ENCODE measurements at regions of chr7 and their contacts with region 1.

Region 1: GRCh38 chr7:143008007-143008901 is 18.7 kb downstream of the OR9A2 start:
- DNase-seq: no peak
- H3K4me3 ChIP-seq: no peak overlapping the region
- CTCF ChIP-seq: peak; percentile 97

Region 2: GRCh38 chr7:142603870-142604448 is 404.3 kb before region 1 on chr7:
- CTCF ChIA-PET with region 1: interaction called, 22 read pairs
- POLR2A ChIA-PET with region 1: no interaction called
- DNase-seq: no peak
- H3K4me3 ChIP-seq: no peak overlapping the region; the same call in 1 of the 2 replicates
- CTCF ChIP-seq: peak; percentile 70

Region 3: GRCh38 chr7:142811154-142811737 is 197.0 kb before region 1 on chr7:
- CTCF ChIA-PET with region 1: interaction called, 16 read pairs
- POLR2A ChIA-PET with region 1: no interaction called
- DNase-seq: no peak
- H3K4me3 ChIP-seq: no peak overlapping the region
- CTCF ChIP-seq: peak; percentile 41

Region 4: DNA sequence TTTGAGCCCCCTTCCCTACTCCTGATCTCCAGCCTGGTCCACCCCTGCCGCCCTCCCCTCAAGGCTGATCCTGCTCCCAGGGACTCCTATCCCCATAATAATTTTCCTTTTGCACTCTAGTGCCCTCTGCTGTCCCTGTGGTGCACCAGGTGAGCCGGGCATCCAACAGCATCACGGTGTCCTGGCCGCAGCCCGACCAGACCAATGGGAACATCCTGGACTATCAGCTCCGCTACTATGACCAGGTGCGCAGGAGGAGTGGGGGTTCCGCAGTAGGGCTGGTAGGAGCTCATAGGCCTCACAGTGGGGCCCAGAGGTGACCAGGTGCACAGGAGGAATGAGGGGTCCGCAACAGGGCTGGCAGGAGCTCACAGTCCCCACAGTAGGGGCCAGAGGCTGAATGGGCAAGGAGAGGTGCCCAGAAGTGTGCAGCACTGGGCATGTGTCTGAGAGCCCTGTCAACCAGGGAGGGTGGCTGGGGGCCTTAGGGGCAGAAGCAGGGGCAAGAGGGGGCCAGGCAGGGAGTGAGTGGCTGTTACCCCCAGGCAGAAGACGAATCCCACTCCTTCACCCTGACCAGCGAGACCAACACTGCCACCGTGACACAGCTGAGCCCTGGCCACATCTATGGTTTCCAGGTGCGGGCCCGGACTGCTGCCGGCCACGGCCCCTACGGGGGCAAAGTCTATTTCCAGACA is 141.7 kb before region 1 on chr7:
- CTCF ChIA-PET with region 1: interaction called, 17 read pairs
- POLR2A ChIA-PET with region 1: no interaction called
- DNase-seq: no peak
- H3K4me3 ChIP-seq: no peak overlapping the region
- CTCF ChIP-seq: peak; percentile 62

Region 5: DNA sequence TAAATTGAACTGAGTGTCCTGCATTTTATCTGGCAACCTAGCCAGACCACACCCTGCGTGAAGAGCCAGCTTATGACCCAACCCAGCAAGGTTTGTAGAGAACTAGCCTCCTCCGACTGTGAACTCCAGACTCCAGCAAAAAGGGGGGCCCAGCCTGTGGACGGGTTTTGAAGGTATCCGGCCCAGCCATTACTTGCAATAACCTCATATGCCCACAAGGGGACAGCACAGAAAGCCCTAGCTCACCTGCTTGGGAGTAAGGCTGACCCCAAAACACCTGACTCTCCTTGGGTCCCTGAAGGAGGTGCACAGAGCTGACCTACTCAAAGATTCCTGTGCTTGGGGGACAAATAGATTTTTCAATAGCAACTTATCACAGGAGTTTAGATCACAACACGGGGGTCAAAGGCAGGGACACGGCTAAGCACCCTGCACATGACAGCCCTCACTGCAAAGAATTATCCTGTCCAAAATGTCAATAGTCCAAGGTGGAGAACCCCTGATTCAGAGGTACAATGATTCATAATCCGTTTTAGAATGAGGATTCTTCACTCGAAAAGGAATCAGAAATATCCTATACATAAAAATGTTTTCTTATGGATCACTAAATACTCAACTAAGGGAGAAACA is 127.3 kb before region 1 on chr7:
- CTCF ChIA-PET with region 1: interaction called, 52 read pairs
- POLR2A ChIA-PET with region 1: no interaction called
- DNase-seq: no peak
- H3K4me3 ChIP-seq: no peak overlapping the region
- CTCF ChIP-seq: peak; percentile 60

Region 6: GRCh38 chr7:142997456-142997989 is 10.7 kb before region 1 on chr7:
- CTCF ChIA-PET with region 1: interaction called, 102 read pairs
- POLR2A ChIA-PET with region 1: no interaction called
- DNase-seq: no peak
- H3K4me3 ChIP-seq: no peak overlapping the region
- CTCF ChIP-seq: no peak

Region 7: GRCh38 chr7:143069912-143070500 is 61.8 kb after region 1 on chr7:
- CTCF ChIA-PET with region 1: no interaction called
- POLR2A ChIA-PET with region 1: no interaction called
- DNase-seq: no peak
- H3K4me3 ChIP-seq: no peak overlapping the region
- CTCF ChIP-seq: no peak

Region 8: DNA sequence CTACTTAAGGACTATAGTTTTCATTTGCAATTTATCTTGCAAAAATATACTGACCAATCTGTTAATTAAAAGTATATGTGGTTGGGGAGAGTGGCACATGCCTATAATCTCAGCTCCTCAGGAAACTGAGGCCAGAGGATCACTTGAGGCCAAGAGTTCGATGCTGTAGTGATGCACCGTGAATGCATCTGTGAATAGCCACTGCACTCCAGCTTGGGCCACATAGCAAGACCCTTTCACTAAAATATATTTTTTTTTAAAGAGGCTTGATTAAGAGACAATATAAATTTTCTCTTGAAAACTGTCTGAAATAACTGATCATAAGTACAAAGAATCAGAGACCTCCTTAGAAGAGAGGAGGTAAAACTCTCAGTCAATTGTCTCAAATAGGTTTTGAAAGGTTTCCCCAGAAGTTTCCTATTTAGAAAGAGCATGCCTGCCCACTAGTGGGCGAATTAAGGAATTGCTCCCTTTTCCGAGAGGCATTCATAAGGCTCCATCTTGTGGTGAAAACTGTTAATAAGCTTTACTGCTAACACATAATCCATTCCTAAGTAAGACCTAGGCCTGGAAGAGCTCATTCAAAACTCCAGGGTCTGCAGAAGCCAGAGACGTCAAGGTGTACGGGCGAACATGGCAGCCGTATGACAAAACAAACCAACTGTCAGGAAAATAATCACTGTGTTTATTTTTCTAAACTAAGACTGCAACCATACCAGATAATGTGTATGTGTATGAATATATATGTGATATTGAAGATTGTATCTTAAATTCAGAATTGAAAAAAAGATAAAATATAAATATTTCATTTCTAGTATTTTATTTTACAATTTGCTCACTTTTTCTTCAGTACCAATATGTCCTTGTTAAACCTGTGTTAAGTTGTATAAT is 206.8 kb after region 1 on chr7:
- CTCF ChIA-PET with region 1: interaction called, 885 read pairs
- POLR2A ChIA-PET with region 1: interaction called, 7 read pairs
- DNase-seq: peak; percentile 62
- H3K4me3 ChIP-seq: no peak overlapping the region
- CTCF ChIP-seq: peak; percentile 93

Measured in AG04449 (cell line).